ENCODE measurements at regions of chr2 and their contacts with region 1.

Region 1: DNA sequence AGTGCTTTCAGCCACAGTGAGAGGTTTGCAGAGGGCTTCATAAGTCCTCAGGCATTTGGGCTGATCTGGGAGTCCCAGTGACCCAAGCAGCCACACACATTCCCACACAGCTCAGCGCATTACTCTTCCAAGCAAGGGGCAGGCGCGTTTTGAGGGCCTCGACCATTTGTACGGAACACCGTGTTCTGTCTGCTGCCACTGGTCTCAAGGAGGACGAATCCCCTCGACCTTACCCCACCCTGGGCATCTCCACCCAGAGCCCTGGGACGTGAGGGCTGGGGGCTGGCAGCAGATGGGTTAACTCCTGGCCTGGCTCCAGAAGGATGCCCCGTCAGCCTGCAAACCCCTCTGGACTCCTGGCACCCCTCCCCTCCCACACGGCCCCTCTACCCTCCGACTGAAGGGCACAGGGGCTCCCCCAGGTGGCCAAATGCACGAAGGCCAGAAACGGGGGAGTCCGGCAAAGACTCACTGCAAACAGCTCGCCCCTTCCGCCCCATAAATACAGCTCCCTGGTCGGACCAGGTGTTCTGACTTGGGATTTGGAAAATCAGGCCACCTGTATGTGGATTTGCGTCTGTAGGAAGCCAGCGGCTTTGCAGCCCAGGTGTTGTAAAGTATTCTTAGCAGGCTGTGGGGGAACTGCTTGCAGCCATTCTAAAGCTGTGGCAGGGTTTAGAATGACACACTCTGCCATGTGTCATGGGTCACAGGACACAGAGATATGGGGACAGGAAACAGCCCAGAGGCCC is 33.6 kb upstream of the PTMA start:
- DNase-seq: peak; percentile 72
- CTCF ChIP-seq: peak; percentile 92

Region 2: DNA sequence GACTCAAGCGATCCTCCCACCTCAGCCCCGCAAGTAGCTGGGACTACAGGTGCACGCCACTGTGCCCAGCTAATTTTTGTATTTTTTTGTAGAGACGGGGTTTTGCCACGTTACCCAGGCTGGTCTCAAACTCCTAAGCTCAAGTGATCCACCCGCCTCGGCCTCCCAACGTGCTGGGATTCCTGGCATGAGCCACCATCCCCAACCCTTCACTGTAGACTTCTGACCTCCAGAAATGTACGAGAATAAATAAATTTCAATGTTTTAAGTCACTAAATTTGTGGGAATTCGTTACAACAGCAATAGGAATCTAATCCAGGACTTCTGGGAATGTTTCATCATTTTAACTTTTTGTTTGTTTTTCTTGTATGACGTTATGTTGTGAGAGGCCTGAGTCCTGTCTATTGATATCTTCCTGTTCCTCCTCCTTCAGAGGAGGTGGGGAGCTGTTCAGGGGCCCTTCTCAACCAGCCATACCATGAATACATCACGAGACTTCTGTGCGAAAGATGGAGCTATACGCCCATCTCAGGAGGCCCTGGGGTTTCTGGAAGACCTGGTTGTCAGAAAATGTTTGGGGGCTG is 42.1 kb before region 1 on chr2:
- CTCF ChIA-PET with region 1: interaction called, 11 read pairs
- POLR2A ChIA-PET with region 1: interaction called, 3 read pairs
- DNase-seq: peak; percentile 11
- CTCF ChIP-seq: no peak

Region 3: GRCh38 chr2:231662028-231662810 is 12.5 kb before region 1 on chr2:
- CTCF ChIA-PET with region 1: interaction called, 186 read pairs
- POLR2A ChIA-PET with region 1: no interaction called
- DNase-seq: peak; percentile 97
- CTCF ChIP-seq: no peak

Region 4: DNA sequence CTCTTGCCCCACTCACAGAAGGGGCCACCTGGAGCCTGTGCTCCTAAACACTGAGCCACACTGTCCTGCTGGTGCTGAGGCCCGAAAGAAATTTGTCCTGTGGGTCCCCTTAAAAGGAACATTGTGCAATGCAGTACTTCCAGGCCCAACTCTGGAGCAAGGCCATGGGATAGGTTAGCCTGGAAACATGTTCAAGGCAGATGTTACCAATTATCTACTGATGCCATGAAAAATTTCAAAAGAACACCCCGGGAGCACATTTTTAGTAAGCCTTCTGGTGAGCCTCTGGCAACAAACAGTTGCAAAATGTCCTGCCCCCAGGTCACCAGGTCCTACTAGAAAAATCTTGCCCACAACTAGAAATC is 21.2 kb after region 1 on chr2:
- CTCF ChIA-PET with region 1: interaction called, 434 read pairs
- POLR2A ChIA-PET with region 1: interaction called, 3 read pairs
- DNase-seq: no peak
- CTCF ChIP-seq: no peak

Region 5: GRCh38 chr2:231786177-231786916 is 111.6 kb after region 1 on chr2 and contains the start of gene COPS7B:
- CTCF ChIA-PET with region 1: interaction called, 17 read pairs
- POLR2A ChIA-PET with region 1: no interaction called
- DNase-seq: peak; percentile 86
- CTCF ChIP-seq: peak; percentile 52

Region 6: DNA sequence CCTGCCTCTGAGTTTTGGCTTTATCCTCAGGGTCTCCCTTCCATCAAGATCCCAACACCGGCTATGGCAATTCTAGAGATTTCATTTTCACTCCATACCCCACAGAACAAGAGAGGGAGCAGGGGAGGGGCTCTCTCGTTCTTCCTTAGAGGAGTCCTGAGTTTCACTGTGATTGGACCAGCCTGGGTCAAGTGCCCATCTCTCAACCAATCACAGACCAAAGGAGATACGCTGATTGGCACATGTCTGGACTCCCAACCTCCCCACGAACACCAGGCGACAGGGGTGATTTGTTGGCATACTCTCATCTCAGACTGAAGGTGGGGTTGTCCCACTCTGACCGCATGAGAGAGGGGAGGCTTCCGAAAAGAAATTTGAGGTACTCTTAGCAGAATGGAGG is 186.8 kb after region 1 on chr2:
- CTCF ChIA-PET with region 1: no interaction called
- POLR2A ChIA-PET with region 1: no interaction called
- DNase-seq: no peak
- CTCF ChIP-seq: no peak

Measured in GM10248 (cell line).